Activated T-helper 1 cell treated with anti-CD3 and anti-CD28 coated beads, Interleukin-12 subunit alpha, Interleukin-12 subunit beta, Interleukin-2, Interleukin-4 antibody, amounts not matched to agents 30 ng/mL and 10 ng/mL and 1 ng/mL, durations not matched to agents 14 hours and 24 hours and 36 hours (primary cell): ENCODE measurements at regions of chr13 and their contacts with region 1.

Region 1: GRCh38 chr13:99281811-99282263 is 23.7 kb upstream of the GPR18 start:
- DNase-seq: no peak
- H3K4me3 Mint-ChIP-seq: no peak overlapping the region
- H3K27ac Mint-ChIP-seq: peak overlapping the region; percentile 32
- H3K4me1 Mint-ChIP-seq: peaks cover 64% of the 10 kb centered on the region
- H3K27me3 Mint-ChIP-seq: no peaks in the 10 kb centered on the region

Region 2: DNA sequence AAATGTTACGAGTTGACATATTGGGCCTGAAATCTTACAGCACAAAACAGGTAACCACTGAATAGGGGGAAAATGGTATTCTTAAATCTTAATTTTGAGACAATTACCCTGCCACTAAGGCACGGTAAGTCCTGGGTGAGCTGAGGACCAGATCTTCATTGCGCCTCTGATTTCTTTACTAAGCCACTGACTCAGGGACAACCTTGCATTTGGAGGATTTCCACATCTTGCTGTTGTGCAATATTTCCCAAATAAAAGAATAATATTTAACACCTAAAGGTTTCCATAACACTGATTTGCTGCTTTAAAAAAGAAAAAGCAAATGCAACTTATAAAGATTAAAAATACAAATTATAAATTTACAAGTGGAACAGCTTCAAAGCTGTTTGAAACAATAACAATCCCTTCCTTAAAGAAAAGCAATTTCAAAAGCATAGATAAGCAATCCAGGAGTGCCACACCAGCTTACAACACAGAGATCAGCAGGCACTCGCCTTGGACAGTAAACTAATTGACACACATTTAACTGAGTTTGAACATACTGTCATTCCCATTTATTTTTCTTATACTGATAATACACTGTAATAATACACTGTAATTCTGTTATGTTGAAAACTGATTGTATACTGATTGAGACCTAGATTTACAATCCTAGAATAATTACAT is 224.4 kb before region 1 on chr13:
- intact Hi-C with region 1: no loop called
- DNase-seq: no peak
- H3K4me3 Mint-ChIP-seq: no peak overlapping the region
- H3K27ac Mint-ChIP-seq: no peak overlapping the region
- H3K4me1 Mint-ChIP-seq: peaks cover 51% of the 10 kb centered on the region
- H3K27me3 Mint-ChIP-seq: no peaks in the 10 kb centered on the region

Region 3: GRCh38 chr13:99124794-99125316 is 157.0 kb before region 1 on chr13:
- intact Hi-C with region 1: no loop called
- DNase-seq: no peak
- H3K4me3 Mint-ChIP-seq: peak overlapping the region; percentile 19
- H3K27ac Mint-ChIP-seq: peak overlapping the region; percentile 31
- H3K4me1 Mint-ChIP-seq: peaks cover 21% of the 10 kb centered on the region
- H3K27me3 Mint-ChIP-seq: peaks cover 2% of the 10 kb centered on the region

Region 4: GRCh38 chr13:99246100-99246499 is 35.7 kb before region 1 on chr13:
- intact Hi-C with region 1: loop called (anchors 1 kb)
- DNase-seq: no peak
- H3K4me3 Mint-ChIP-seq: no peak overlapping the region
- H3K27ac Mint-ChIP-seq: no peak overlapping the region
- H3K4me1 Mint-ChIP-seq: peaks cover 24% of the 10 kb centered on the region
- H3K27me3 Mint-ChIP-seq: no peaks in the 10 kb centered on the region